ENCODE measurements at regions of chr9 and their contacts with region 1.

Region 1: DNA sequence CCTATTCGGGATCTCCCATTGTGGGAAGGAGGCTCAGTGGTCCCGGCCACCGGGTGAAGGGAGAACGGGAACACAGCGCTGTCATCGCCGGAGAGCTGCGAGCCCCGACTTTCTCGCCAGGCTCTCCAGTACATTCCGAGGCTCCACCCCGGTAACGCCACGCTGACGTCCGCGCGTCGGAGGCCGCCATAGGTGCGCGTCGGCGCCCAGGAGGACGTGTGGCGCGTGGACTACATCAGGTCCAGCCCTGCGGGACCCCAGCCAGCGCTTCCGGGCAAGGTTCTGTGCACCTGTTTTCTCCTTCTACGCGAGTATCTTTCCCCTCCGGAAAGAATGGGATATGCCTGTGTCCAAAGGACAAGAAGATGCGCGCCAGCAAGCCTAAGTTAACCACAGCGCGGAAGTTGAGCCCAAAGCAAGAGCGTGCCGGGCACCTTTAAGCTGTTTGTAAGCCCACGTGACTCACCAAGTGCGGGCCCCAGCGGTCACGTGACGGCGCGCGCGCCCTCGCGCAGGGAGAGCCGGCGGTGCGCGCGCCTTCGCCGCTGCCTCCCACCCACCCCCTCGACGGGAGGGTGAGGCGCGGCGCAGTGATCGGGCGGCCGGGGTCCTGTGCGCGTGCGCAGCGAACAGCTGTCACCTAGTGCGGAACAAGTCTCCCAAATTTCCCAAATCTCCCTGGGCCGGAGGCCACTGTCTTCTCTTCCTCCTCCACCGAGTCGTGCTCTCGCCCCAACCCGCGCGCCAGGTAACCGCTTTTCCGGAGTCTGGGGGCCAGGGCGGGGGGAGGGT is at the start of gene KDM4C:
- DNase-seq: peak; percentile 92
- ATAC-seq: peak; percentile 75
- H3K4me3 Mint-ChIP-seq: peak within 1 kb of the TSS; percentile 99
- H3K27ac Mint-ChIP-seq: peak within 1 kb of the TSS; percentile 100
- H3K4me1 Mint-ChIP-seq: peaks cover 39% of the 10 kb centered on the region
- H3K27me3 Mint-ChIP-seq: no peaks in the 10 kb centered on the region
- CTCF ChIP-seq: no peak
- total RNA-seq, gene KDM4C: 90.7 and 113 TPM in 2 replicates

Region 2: GRCh38 chr9:4792572-4793458 is 1964.8 kb before region 1 on chr9 and contains the start of gene RCL1:
- CTCF ChIA-PET with region 1: no interaction called
- POLR2A ChIA-PET with region 1: interaction called, 3 read pairs
- intact Hi-C with region 1: loop called (anchors 1 kb)
- DNase-seq: peak; percentile 97
- ATAC-seq: peak; percentile 93
- H3K4me3 Mint-ChIP-seq: peak within 1 kb of the TSS; percentile 97
- H3K27ac Mint-ChIP-seq: peak within 1 kb of the TSS; percentile 96
- H3K4me1 Mint-ChIP-seq: peaks cover 40% of the 10 kb centered on the region
- H3K27me3 Mint-ChIP-seq: peaks cover 2% of the 10 kb centered on the region
- CTCF ChIP-seq: no peak
- total RNA-seq, gene RCL1: 23.9 and 26.0 TPM in 2 replicates

Region 3: DNA sequence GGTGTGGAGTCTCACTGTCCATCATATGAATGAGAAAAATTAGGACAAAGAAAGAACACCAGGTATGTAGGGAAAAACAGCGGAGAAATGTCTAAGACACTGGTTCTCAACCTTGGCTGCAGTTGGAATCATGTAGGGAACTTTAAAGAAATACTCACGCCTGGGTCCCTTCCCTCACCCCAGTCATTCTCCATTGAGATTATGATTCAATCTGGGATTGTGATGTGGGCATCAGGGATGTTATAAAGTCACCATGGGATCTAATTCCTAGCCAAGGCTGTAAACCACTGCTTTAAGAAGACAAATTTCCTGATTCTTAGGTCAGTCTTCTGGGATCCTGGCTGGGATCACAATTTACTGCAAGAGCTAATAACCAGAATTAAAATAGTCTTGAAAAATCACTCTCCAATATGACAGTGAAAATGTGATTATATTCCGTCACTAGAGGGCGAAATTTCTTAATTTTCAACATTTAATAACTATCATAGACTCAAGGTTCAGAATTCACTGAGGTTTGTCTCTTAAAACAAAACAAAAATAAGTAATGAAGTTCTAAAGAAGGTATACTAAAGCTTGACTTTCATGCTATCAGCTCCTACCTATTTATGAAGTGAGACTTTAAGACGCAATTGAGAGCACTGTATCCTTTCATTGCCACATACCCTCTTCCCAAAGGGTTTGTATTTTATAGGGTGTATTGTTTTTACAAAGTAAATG is 172.6 kb before region 1 on chr9:
- CTCF ChIA-PET with region 1: interaction called, 5 read pairs
- POLR2A ChIA-PET with region 1: interaction called, 10 read pairs
- intact Hi-C with region 1: loop called (anchors 2 kb)
- DNase-seq: no peak
- ATAC-seq: peak; percentile 54
- H3K4me3 Mint-ChIP-seq: no peak overlapping the region
- H3K27ac Mint-ChIP-seq: no peak overlapping the region
- H3K4me1 Mint-ChIP-seq: peaks cover 41% of the 10 kb centered on the region
- H3K27me3 Mint-ChIP-seq: no peaks in the 10 kb centered on the region
- CTCF ChIP-seq: no peak

Region 4: DNA sequence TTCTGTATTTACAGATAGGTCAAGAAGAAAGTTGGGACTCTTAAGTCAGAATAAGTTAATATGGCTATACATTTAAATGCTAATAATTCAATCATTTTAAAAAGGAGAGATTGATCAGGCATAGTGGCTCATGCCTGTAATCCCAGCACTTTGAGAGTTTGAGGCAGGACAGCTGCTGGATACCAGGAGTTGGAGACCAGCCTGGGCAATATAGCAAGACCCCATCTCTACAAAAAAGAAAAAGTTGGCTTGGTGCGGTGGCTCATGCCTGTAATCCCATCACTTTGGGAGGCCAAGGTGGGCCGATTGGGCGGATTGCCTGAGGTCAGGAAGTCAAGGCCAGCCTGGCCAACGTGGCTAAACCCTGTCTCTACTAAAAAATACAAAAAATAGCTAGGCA is 97.1 kb before region 1 on chr9:
- CTCF ChIA-PET with region 1: no interaction called
- POLR2A ChIA-PET with region 1: no interaction called
- intact Hi-C with region 1: no loop called
- DNase-seq: no peak
- ATAC-seq: no peak
- H3K4me3 Mint-ChIP-seq: no peak overlapping the region
- H3K27ac Mint-ChIP-seq: no peak overlapping the region
- H3K4me1 Mint-ChIP-seq: no peaks in the 10 kb centered on the region
- H3K27me3 Mint-ChIP-seq: peaks cover 3% of the 10 kb centered on the region
- CTCF ChIP-seq: no peak

Region 5: DNA sequence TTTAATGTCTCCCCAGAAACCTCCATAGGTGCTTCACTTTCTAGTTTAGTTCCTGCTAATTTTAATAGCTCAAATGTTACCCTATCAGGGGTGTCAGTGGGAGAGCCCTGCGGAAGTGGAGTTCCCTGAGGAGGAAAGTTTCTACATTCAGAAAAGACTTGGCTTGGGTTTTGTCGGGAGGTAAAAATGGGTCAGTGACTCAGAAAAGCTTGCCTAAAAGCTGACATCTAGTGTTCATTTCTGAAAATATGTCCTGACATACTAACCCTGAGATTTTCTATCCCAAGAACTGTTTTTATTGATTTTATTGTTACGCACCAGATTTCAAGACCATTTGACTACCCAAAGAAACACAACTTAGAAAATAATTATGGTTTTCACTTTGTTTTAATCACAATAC is 71.3 kb before region 1 on chr9:
- CTCF ChIA-PET with region 1: interaction called, 6 read pairs
- POLR2A ChIA-PET with region 1: interaction called, 853 read pairs
- intact Hi-C with region 1: loop called (anchors 1 kb)
- DNase-seq: no peak
- ATAC-seq: no peak
- H3K4me3 Mint-ChIP-seq: peak overlapping the region; percentile 50
- H3K27ac Mint-ChIP-seq: peak overlapping the region; percentile 84
- H3K4me1 Mint-ChIP-seq: peaks cover 75% of the 10 kb centered on the region
- H3K27me3 Mint-ChIP-seq: no peaks in the 10 kb centered on the region
- CTCF ChIP-seq: no peak

Region 6: GRCh38 chr9:6723881-6724420 is 33.7 kb before region 1 on chr9:
- CTCF ChIA-PET with region 1: no interaction called
- POLR2A ChIA-PET with region 1: interaction called, 21 read pairs
- intact Hi-C with region 1: no loop called
- DNase-seq: no peak
- ATAC-seq: no peak
- H3K4me3 Mint-ChIP-seq: no peak overlapping the region
- H3K27ac Mint-ChIP-seq: peak overlapping the region; percentile 84
- H3K4me1 Mint-ChIP-seq: peaks cover 27% of the 10 kb centered on the region
- H3K27me3 Mint-ChIP-seq: no peaks in the 10 kb centered on the region
- CTCF ChIP-seq: no peak

Region 7: GRCh38 chr9:6894135-6894534 is 136.5 kb after region 1 on chr9:
- CTCF ChIA-PET with region 1: no interaction called
- POLR2A ChIA-PET with region 1: interaction called, 14 read pairs
- intact Hi-C with region 1: no loop called
- DNase-seq: no peak
- ATAC-seq: no peak
- H3K4me3 Mint-ChIP-seq: no peak overlapping the region
- H3K27ac Mint-ChIP-seq: no peak overlapping the region
- H3K4me1 Mint-ChIP-seq: peaks cover 38% of the 10 kb centered on the region
- H3K27me3 Mint-ChIP-seq: no peaks in the 10 kb centered on the region
- CTCF ChIP-seq: no peak

Region 8: DNA sequence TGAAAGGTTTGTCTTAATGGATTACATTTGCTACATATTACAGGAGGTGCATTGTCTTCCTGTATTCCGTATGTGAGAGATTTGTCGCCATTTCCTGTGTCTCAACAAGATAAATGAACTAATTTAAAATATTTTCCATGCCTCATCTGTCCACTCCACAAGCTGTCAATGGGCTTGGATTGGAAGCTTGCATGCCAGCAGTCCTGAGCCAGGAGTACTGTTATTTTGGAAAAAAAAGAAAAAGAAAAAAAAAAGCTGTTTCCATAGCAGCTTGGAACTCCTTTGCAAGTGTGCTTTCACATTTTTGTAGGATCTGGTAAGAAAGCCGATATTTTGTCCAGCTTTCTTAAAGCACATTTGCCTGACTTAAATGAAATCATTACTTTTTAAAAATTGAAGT is 331.0 kb after region 1 on chr9:
- CTCF ChIA-PET with region 1: no interaction called
- POLR2A ChIA-PET with region 1: no interaction called
- intact Hi-C with region 1: no loop called
- DNase-seq: no peak
- ATAC-seq: no peak
- H3K4me3 Mint-ChIP-seq: no peak overlapping the region
- H3K27ac Mint-ChIP-seq: no peak overlapping the region
- H3K4me1 Mint-ChIP-seq: no peaks in the 10 kb centered on the region
- H3K27me3 Mint-ChIP-seq: no peaks in the 10 kb centered on the region
- CTCF ChIP-seq: no peak

Measured in activated B cell treated with CpG ODN at 0.5 μM for 24 hours (primary cell).